T-cell (primary cell): ENCODE measurements at regions of chr16 and their contacts with region 1.

Region 1: DNA sequence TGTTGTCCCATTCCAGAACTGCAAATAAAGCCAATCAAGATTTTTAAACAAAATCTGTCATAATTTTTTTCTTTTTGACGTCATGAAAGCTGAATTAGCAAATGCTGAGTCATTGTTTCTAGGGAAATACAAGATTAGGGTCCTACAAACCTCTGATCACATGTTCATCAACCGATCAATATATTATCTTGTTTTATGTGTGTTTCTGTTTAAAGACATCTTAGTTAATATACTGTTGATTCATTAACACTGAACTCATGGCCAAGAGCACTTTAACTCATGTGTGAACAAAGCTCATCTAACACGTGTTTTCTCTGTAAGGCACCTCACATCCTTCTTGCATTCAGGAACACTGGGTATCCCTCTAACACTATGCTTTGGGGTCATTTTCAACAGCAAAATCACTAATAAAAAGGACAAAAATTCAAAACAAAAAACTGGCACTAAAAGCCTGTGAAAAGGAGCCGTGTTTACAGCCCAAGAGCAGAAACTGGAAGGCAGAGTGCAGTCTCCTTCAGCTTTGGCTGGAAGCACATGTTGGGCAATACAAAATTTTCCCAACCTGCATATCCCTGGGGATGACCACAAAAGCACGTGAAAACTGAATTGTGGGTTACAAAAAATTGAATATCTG is 102.5 kb downstream of the PARN start:
- DNase-seq: no peak
- ATAC-seq: no peak
- H3K4me3 ChIP-seq: no peak overlapping the region
- H3K4me3 Mint-ChIP-seq: no peak overlapping the region
- H3K27ac ChIP-seq: no peak overlapping the region
- H3K27ac Mint-ChIP-seq: no peak overlapping the region
- H3K4me1 ChIP-seq: peaks cover 0 to 3% of the 10 kb centered on the region in 2 experiments
- H3K4me1 Mint-ChIP-seq: peaks cover 11 to 17% (median 12%) of the 10 kb centered on the region in 3 donors
- H3K27me3 ChIP-seq: no peaks in the 10 kb centered on the region
- H3K27me3 Mint-ChIP-seq: no peaks in the 10 kb centered on the region

Region 2: GRCh38 chr16:14251419-14251818 is 276.1 kb before region 1 on chr16:
- CTCF ChIA-PET with region 1: interaction called, 4 to 6 read pairs
- POLR2A ChIA-PET with region 1: interaction called in 1 of 2 experiments, 11 read pairs
- DNase-seq: no peak
- ATAC-seq: no peak
- H3K4me3 ChIP-seq: no peak overlapping the region
- H3K4me3 Mint-ChIP-seq: no peak overlapping the region
- H3K27ac ChIP-seq: no peak overlapping the region
- H3K27ac Mint-ChIP-seq: no peak overlapping the region
- H3K4me1 ChIP-seq: no peaks in the 10 kb centered on the region
- H3K4me1 Mint-ChIP-seq: no peaks in the 10 kb centered on the region
- H3K27me3 ChIP-seq: no peaks in the 10 kb centered on the region
- H3K27me3 Mint-ChIP-seq: no peaks in the 10 kb centered on the region

Region 3: DNA sequence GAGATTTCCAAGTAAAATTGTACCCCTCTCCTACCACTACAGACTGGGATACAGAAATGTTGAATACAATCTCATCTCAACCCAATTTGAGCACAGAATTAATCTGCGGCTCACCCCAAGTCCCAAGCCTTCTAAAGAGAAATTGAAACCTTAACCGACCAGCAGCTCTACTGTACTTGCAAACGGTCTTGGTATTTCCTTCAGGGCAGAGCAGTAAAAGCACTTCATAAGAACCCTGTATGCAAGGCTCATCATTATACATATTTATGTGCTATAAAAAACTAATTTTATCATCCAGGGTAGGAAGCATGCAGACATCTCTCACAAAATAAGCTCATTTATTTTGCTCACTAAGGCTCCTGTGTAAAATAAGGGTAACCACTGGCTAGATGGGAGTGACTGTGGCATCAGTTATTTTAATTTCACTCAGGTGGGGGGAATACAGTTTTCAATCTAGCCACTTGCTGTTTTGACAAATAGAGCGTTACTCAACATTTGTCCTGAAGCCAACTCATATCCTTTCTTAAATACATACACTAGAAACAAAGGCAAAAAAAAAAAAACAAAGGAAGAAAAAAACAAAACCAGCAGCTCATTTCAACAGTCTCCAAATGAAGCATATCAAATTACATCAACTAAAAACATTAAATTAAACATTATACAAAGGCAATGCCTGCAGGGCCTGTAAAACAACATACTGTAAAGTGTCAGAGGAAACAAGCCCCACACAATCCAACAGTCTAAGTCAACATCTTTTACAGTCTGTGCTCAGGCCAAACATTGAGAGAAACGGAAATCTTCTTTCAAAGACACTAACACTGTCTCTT is 37.5 kb after region 1 on chr16:
- CTCF ChIA-PET with region 1: interaction called, 3 to 10 read pairs
- POLR2A ChIA-PET with region 1: no interaction called
- DNase-seq: no peak
- ATAC-seq: no peak
- H3K4me3 ChIP-seq: no peak overlapping the region
- H3K4me3 Mint-ChIP-seq: peak overlapping the region in 2 of 3 donors; percentile 37 to 48
- H3K27ac ChIP-seq: no peak overlapping the region
- H3K27ac Mint-ChIP-seq: peak overlapping the region; percentile 45 to 53
- H3K4me1 ChIP-seq: no peaks in the 10 kb centered on the region
- H3K4me1 Mint-ChIP-seq: peaks cover 6 to 18% (median 16%) of the 10 kb centered on the region in 3 donors
- H3K27me3 ChIP-seq: no peaks in the 10 kb centered on the region
- H3K27me3 Mint-ChIP-seq: no peaks in the 10 kb centered on the region